ENCODE measurements at regions of chrX and their contacts with region 1.

Region 1: DNA sequence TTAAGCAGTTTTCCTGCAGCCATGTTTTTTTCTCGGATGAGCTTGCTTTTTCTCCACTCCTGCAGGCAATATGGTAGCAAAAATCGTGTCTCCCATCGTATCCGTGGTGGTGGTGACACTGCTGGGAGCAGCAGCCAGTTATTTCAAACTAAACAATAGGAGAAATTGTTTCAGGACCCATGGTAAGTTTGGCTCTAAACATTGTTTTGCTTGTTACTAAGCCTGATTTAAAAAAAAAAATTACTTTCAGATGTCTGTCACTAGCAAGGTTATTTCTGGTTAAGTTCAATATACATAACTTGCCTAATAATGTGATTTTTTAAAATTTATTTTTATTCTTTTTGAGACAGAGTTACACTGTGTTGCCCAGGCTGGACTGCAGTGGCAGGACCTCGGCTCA is 17.5 kb upstream of the GYG2 start:
- DNase-seq: no peak
- ATAC-seq: no peak
- H3K4me3 ChIP-seq: no peak overlapping the region
- H3K27ac ChIP-seq: no peak overlapping the region
- H3K4me1 ChIP-seq: no peaks in the 10 kb centered on the region
- H3K27me3 ChIP-seq: no peaks in the 10 kb centered on the region
- CTCF ChIP-seq: no peak
- POLR2A ChIP-seq: no peak

Region 2: GRCh38 chrX:2640275-2641150 is 170.8 kb before region 1 on chrX:
- in situ Hi-C with region 1: loop called in 3 of 4 experiments (anchors 5 to 10 kb)
- intact Hi-C with region 1: loop called (anchors 2 kb)
- DNase-seq: no peak
- ATAC-seq: no peak
- H3K4me3 ChIP-seq: no peak overlapping the region
- H3K27ac ChIP-seq: no peak overlapping the region
- H3K4me1 ChIP-seq: no peaks in the 10 kb centered on the region
- H3K27me3 ChIP-seq: no peaks in the 10 kb centered on the region
- CTCF ChIP-seq: no peak
- POLR2A ChIP-seq: no peak

Region 3: GRCh38 chrX:2647627-2648026 is 163.6 kb before region 1 on chrX:
- in situ Hi-C with region 1: loop called (anchors 5 to 25 kb)
- intact Hi-C with region 1: loop called (anchors 2 kb)
- DNase-seq: no peak
- ATAC-seq: no peak
- H3K4me3 ChIP-seq: no peak overlapping the region
- H3K27ac ChIP-seq: no peak overlapping the region
- H3K4me1 ChIP-seq: no peaks in the 10 kb centered on the region
- H3K27me3 ChIP-seq: no peaks in the 10 kb centered on the region
- CTCF ChIP-seq: no peak
- POLR2A ChIP-seq: no peak

Region 4: DNA sequence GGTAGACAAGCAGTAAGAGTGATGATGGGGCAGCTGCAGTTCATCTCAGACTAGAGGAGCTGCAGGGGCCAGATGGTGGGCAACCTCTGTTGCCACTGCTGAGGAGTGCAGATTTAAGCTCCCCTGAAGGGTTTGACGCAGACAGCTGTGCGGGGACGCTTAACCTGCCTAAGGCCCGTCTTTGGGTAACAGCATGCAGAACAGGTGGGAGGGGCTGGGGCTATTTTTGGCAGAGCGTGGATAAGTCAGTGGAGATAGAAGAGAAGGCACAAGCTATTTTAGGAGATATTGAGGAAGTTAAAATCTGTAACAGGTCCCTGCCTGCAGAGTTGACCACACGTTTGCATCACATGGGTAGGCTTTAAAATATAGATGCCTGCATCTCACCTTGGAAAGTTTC is 109.7 kb before region 1 on chrX:
- in situ Hi-C with region 1: no loop called
- intact Hi-C with region 1: loop called (anchors 5 kb)
- DNase-seq: peak; percentile 58 to 64
- ATAC-seq: peak; percentile 59 to 60
- H3K4me3 ChIP-seq: no peak overlapping the region
- H3K27ac ChIP-seq: peak overlapping the region; percentile 52 to 91 (median 65)
- H3K4me1 ChIP-seq: peaks cover 77 to 81% of the 10 kb centered on the region in 2 donors
- H3K27me3 ChIP-seq: no peaks in the 10 kb centered on the region
- CTCF ChIP-seq: no peak
- POLR2A ChIP-seq: no peak

Measured in gastrocnemius medialis (tissue), 4 donors.